ENCODE measurements at regions of chr14 and their contacts with region 1.

Region 1: GRCh38 chr14:22570132-22570949 is 18.7 kb downstream of the DAD1 start:
- DNase-seq: peak in 8 of 9 donors; percentile 72 to 98 (median 96)
- ATAC-seq: peak; percentile 98
- H3K4me3 ChIP-seq: peak overlapping the region; percentile 53
- H3K4me3 Mint-ChIP-seq: peak overlapping the region; percentile 68 to 95 (median 80)
- H3K27ac ChIP-seq: peak overlapping the region; percentile 87
- H3K27ac Mint-ChIP-seq: peak overlapping the region; percentile 77 to 99 (median 96)
- H3K4me1 ChIP-seq: peaks cover 49 to 51% of the 10 kb centered on the region in 2 donors
- H3K4me1 Mint-ChIP-seq: peaks cover 28 to 72% (median 68%) of the 10 kb centered on the region in 7 donors
- H3K27me3 ChIP-seq: no peaks in the 10 kb centered on the region
- H3K27me3 Mint-ChIP-seq: no peaks in the 10 kb centered on the region

Region 2: DNA sequence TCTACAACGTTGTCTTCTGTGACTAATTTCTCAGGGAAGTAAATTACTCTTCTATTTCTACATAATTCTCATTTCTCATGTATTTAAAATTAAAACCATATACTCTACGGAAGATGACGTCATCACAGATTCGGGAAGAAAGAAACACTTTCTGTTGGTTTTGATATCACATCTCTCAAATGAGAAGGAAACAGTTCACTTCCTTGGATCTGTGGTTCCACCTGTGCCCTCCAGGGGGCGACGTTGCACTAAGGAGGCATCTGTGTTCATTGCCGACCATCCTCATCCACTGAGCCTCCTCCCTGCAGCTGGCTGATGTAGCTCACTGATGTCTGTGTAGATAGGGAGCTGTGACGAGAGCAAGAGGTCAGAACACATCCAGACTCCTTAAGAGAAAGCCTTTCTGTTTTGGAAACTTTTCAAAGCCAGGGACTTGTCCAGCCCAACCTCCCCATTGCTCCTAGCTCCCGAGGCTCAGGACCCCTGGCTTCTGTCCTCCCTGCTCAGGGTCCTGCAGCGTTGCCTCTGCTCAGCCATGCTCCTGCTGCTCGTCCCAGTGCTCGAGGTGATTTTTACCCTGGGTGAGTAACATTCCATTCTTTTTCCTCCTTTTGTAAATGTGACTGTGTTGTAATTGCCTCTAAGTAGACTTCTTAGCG is 724.0 kb before region 1 on chr14:
- CTCF ChIA-PET with region 1: interaction called, 14 read pairs
- POLR2A ChIA-PET with region 1: interaction called, 7 read pairs
- intact Hi-C with region 1: loop called in 1 of 2 experiments (anchors 1 kb)
- DNase-seq: peak; percentile 48 to 71 (median 64)
- ATAC-seq: peak; percentile 90
- H3K4me3 ChIP-seq: peak overlapping the region; percentile 36
- H3K4me3 Mint-ChIP-seq: peak overlapping the region; percentile 75 to 95 (median 84)
- H3K27ac ChIP-seq: peak overlapping the region; percentile 52
- H3K27ac Mint-ChIP-seq: peak overlapping the region in 8 of 9 donors; percentile 41 to 91 (median 85)
- H3K4me1 ChIP-seq: no peaks in the 10 kb centered on the region
- H3K4me1 Mint-ChIP-seq: peaks cover 1 to 17% (median 10%) of the 10 kb centered on the region in 7 donors
- H3K27me3 ChIP-seq: no peaks in the 10 kb centered on the region
- H3K27me3 Mint-ChIP-seq: peaks cover 13 to 52% (median 24%) of the 10 kb centered on the region in 5 donors

Region 3: GRCh38 chr14:21978184-21978998 is 592.0 kb before region 1 on chr14:
- CTCF ChIA-PET with region 1: interaction called, 16 read pairs
- POLR2A ChIA-PET with region 1: interaction called, 6 read pairs
- intact Hi-C with region 1: loop called in 1 of 2 experiments (anchors 1 kb)
- DNase-seq: peak; percentile 20 to 71 (median 61)
- ATAC-seq: peak; percentile 85
- H3K4me3 ChIP-seq: peak overlapping the region; percentile 9
- H3K4me3 Mint-ChIP-seq: peak overlapping the region; percentile 43 to 84 (median 74)
- H3K27ac ChIP-seq: peak overlapping the region; percentile 26
- H3K27ac Mint-ChIP-seq: peak overlapping the region in 8 of 9 donors; percentile 60 to 85 (median 76)
- H3K4me1 ChIP-seq: peaks cover 0 to 4% of the 10 kb centered on the region in 2 donors
- H3K4me1 Mint-ChIP-seq: peaks cover 6 to 51% (median 25%) of the 10 kb centered on the region in 7 donors
- H3K27me3 ChIP-seq: no peaks in the 10 kb centered on the region
- H3K27me3 Mint-ChIP-seq: peaks cover 0 to 31% (median 0%) of the 10 kb centered on the region in 5 donors

Region 4: GRCh38 chr14:22026527-22026926 is 543.8 kb before region 1 on chr14:
- CTCF ChIA-PET with region 1: no interaction called
- POLR2A ChIA-PET with region 1: no interaction called
- intact Hi-C with region 1: no loop called
- DNase-seq: no peak
- ATAC-seq: no peak
- H3K4me3 ChIP-seq: no peak overlapping the region
- H3K4me3 Mint-ChIP-seq: peak overlapping the region in 3 of 10 donors; percentile 9 to 27 (median 18)
- H3K27ac ChIP-seq: no peak overlapping the region
- H3K27ac Mint-ChIP-seq: no peak overlapping the region
- H3K4me1 ChIP-seq: no peaks in the 10 kb centered on the region
- H3K4me1 Mint-ChIP-seq: peaks cover 0 to 7% (median 5%) of the 10 kb centered on the region in 7 donors
- H3K27me3 ChIP-seq: no peaks in the 10 kb centered on the region
- H3K27me3 Mint-ChIP-seq: peaks cover 0 to 15% (median 0%) of the 10 kb centered on the region in 5 donors

Region 5: GRCh38 chr14:22200977-22201605 is 369.2 kb before region 1 on chr14:
- CTCF ChIA-PET with region 1: interaction called, 5 read pairs
- POLR2A ChIA-PET with region 1: no interaction called
- intact Hi-C with region 1: loop called in 1 of 2 experiments (anchors 1 kb)
- DNase-seq: peak in 6 of 9 donors; percentile 18 to 56 (median 37)
- ATAC-seq: peak; percentile 84
- H3K4me3 ChIP-seq: no peak overlapping the region
- H3K4me3 Mint-ChIP-seq: peak overlapping the region in 3 of 10 donors; percentile 25 to 63 (median 33)
- H3K27ac ChIP-seq: no peak overlapping the region
- H3K27ac Mint-ChIP-seq: peak overlapping the region in 2 of 9 donors; percentile 54 to 75
- H3K4me1 ChIP-seq: no peaks in the 10 kb centered on the region
- H3K4me1 Mint-ChIP-seq: peaks cover 0 to 17% (median 8%) of the 10 kb centered on the region in 7 donors
- H3K27me3 ChIP-seq: no peaks in the 10 kb centered on the region
- H3K27me3 Mint-ChIP-seq: no peaks in the 10 kb centered on the region

Region 6: DNA sequence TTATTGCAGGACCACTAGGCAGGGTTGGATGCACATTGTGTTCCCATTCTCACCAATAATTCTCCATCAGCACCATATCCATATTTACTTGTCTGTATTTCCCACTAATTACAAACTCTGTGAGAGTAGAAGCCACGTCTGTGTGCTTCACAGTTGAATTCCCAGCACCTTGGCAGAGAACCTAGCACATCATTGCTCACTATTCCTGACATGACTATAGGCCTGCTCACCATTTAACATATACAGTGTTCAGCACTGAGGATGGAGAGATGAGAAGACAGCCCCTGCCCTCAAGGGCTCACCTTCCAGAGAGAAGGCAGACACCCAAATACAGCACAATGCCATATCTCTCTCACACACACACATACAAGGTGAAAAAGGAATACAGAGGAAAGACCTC is 13.7 kb after region 1 on chr14:
- CTCF ChIA-PET with region 1: interaction called, 52 read pairs
- POLR2A ChIA-PET with region 1: interaction called, 82 read pairs
- intact Hi-C with region 1: loop called (anchors 1 kb)
- DNase-seq: peak in 1 of 9 donors; percentile 15
- ATAC-seq: no peak
- H3K4me3 ChIP-seq: no peak overlapping the region
- H3K4me3 Mint-ChIP-seq: peak overlapping the region in 9 of 10 donors; percentile 29 to 86 (median 61)
- H3K27ac ChIP-seq: peak overlapping the region; percentile 48
- H3K27ac Mint-ChIP-seq: peak overlapping the region; percentile 29 to 100 (median 84)
- H3K4me1 ChIP-seq: peaks cover 37 to 50% of the 10 kb centered on the region in 2 donors
- H3K4me1 Mint-ChIP-seq: peaks cover 62 to 89% (median 78%) of the 10 kb centered on the region in 7 donors
- H3K27me3 ChIP-seq: no peaks in the 10 kb centered on the region
- H3K27me3 Mint-ChIP-seq: peaks cover 0 to 2% (median 0%) of the 10 kb centered on the region in 5 donors

Region 7: GRCh38 chr14:22822571-22823098 is 252.3 kb after region 1 on chr14:
- CTCF ChIA-PET with region 1: interaction called, 24 read pairs
- POLR2A ChIA-PET with region 1: interaction called, 5 read pairs
- intact Hi-C with region 1: loop called (anchors 1 to 2 kb)
- DNase-seq: peak; percentile 50 to 71 (median 65)
- ATAC-seq: peak; percentile 83
- H3K4me3 ChIP-seq: peak overlapping the region; percentile 38
- H3K4me3 Mint-ChIP-seq: peak overlapping the region; percentile 47 to 78 (median 66)
- H3K27ac ChIP-seq: no peak overlapping the region
- H3K27ac Mint-ChIP-seq: peak overlapping the region in 3 of 9 donors; percentile 11 to 36 (median 22)
- H3K4me1 ChIP-seq: peaks cover 0 to 17% of the 10 kb centered on the region in 2 donors
- H3K4me1 Mint-ChIP-seq: peaks cover 6 to 37% (median 24%) of the 10 kb centered on the region in 7 donors
- H3K27me3 ChIP-seq: no peaks in the 10 kb centered on the region
- H3K27me3 Mint-ChIP-seq: peaks cover 0 to 16% (median 4%) of the 10 kb centered on the region in 5 donors

Region 8: GRCh38 chr14:23068476-23069412 is 498.4 kb after region 1 on chr14:
- CTCF ChIA-PET with region 1: no interaction called
- POLR2A ChIA-PET with region 1: interaction called, 4 read pairs
- intact Hi-C with region 1: loop called in 1 of 2 experiments (anchors 5 kb)
- DNase-seq: peak; percentile 37 to 83 (median 74)
- ATAC-seq: peak; percentile 90
- H3K4me3 ChIP-seq: no peak overlapping the region
- H3K4me3 Mint-ChIP-seq: peak overlapping the region in 7 of 10 donors; percentile 56 to 76 (median 64)
- H3K27ac ChIP-seq: no peak overlapping the region
- H3K27ac Mint-ChIP-seq: peak overlapping the region; percentile 63 to 88 (median 78)
- H3K4me1 ChIP-seq: peaks cover 16 to 28% of the 10 kb centered on the region in 2 donors
- H3K4me1 Mint-ChIP-seq: peaks cover 30 to 58% (median 46%) of the 10 kb centered on the region in 7 donors
- H3K27me3 ChIP-seq: no peaks in the 10 kb centered on the region
- H3K27me3 Mint-ChIP-seq: no peaks in the 10 kb centered on the region